Lower lobe of right lung (tissue), 2 donors: ENCODE measurements at regions of chr13 and their contacts with region 1.

Region 1: GRCh38 chr13:110819203-110820014 is 95.5 kb downstream of the ANKRD10 start:
- DNase-seq: peak; percentile 84
- ATAC-seq: peak; percentile 92 to 95
- H3K4me3 ChIP-seq: no peak overlapping the region
- H3K27ac ChIP-seq: no peak overlapping the region
- H3K4me1 ChIP-seq: no peaks in the 10 kb centered on the region
- H3K27me3 ChIP-seq: no peaks in the 10 kb centered on the region
- CTCF ChIP-seq: peak; percentile 98

Region 2: GRCh38 chr13:110593430-110594130 is 225.8 kb before region 1 on chr13:
- intact Hi-C with region 1: loop called (anchors 5 kb)
- DNase-seq: no peak
- ATAC-seq: peak; percentile 84
- H3K4me3 ChIP-seq: no peak overlapping the region
- H3K27ac ChIP-seq: no peak overlapping the region
- H3K4me1 ChIP-seq: no peaks in the 10 kb centered on the region
- H3K27me3 ChIP-seq: no peaks in the 10 kb centered on the region
- CTCF ChIP-seq: peak; percentile 68